PC-3 (cell line): ENCODE measurements at regions of chr15 and their contacts with region 1.

Region 1: DNA sequence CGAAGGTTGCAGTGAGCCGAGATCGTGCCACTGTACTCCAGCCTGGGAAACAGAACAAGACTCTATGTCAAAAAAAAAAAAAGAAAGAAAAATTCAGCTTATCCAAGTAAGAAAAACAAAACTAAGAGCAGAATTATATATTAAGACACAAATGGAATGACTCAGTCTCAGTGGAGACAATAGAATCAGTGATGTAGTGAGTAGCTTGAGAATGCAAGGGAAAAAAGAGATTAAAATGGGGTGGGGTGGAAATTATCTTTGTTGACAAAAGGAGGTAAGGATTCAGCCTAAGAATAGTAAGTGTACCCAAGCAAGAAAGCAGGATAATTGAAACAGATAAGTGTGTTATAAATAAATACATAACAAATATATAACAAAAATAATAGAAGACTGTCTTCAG is 70.7 kb downstream of the BLM start:
- DNase-seq: no peak
- ATAC-seq: no peak
- H3K4me3 ChIP-seq: no peak overlapping the region
- H3K27ac ChIP-seq: no peak overlapping the region
- H3K4me1 ChIP-seq: no peaks in the 10 kb centered on the region
- H3K27me3 ChIP-seq: no peaks in the 10 kb centered on the region
- CTCF ChIP-seq: no peak

Region 2: DNA sequence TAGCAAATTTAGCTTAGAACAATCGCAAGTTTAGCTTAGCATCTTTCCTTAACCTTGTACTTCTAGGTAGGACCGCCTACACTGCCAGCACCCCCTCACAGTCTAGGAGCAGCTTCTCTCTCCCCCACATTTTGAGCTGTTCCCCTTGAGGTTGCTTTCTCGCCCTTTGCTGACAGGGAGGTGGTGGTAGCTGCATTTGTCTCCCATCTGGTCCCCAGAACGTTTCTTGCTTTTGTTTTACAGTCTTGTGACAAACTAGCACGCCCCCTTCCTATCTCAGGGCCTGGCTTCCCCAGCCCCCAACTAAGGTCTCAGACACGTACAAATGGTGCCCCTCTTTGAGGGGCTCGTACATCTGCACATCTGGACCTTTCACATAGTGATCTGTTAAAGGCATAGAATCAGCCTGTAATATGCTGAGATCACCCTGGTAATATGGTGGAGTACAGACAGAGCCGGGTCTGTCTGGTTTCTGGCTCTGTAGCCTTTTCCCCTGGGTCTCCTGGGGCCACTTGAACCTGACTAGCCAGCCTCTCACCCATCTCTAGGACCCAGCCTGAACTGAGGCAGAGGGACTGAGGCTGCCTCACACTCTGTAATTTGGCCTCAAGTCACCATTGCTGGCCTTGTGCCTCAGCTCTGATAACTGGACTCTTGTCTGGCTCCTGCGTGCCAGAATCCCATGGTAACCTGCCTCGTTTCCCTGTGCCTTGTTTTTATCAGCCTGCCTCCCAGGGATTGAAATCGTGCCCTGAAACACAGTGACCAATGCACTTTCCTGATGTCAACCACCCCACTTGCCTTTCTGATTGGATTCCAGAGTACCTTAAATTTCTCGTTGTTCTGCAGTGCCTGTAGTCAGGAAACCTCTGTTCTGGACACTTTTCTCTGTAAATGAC is 230.4 kb before region 1 on chr15:
- CTCF ChIA-PET with region 1: no interaction called
- POLR2A ChIA-PET with region 1: interaction called, 12 read pairs
- intact Hi-C with region 1: no loop called
- DNase-seq: no peak
- ATAC-seq: no peak
- H3K4me3 ChIP-seq: no peak overlapping the region
- H3K27ac ChIP-seq: no peak overlapping the region
- H3K4me1 ChIP-seq: no peaks in the 10 kb centered on the region
- H3K27me3 ChIP-seq: no peaks in the 10 kb centered on the region
- CTCF ChIP-seq: no peak

Region 3: GRCh38 chr15:90862964-90863778 is 75.3 kb after region 1 on chr15:
- CTCF ChIA-PET with region 1: no interaction called
- POLR2A ChIA-PET with region 1: no interaction called
- intact Hi-C with region 1: no loop called
- DNase-seq: peak; percentile 68
- ATAC-seq: no peak
- H3K4me3 ChIP-seq: no peak overlapping the region
- H3K27ac ChIP-seq: peak overlapping the region; percentile 47
- H3K4me1 ChIP-seq: peaks cover 54% of the 10 kb centered on the region
- H3K27me3 ChIP-seq: no peaks in the 10 kb centered on the region
- CTCF ChIP-seq: no peak

Region 4: DNA sequence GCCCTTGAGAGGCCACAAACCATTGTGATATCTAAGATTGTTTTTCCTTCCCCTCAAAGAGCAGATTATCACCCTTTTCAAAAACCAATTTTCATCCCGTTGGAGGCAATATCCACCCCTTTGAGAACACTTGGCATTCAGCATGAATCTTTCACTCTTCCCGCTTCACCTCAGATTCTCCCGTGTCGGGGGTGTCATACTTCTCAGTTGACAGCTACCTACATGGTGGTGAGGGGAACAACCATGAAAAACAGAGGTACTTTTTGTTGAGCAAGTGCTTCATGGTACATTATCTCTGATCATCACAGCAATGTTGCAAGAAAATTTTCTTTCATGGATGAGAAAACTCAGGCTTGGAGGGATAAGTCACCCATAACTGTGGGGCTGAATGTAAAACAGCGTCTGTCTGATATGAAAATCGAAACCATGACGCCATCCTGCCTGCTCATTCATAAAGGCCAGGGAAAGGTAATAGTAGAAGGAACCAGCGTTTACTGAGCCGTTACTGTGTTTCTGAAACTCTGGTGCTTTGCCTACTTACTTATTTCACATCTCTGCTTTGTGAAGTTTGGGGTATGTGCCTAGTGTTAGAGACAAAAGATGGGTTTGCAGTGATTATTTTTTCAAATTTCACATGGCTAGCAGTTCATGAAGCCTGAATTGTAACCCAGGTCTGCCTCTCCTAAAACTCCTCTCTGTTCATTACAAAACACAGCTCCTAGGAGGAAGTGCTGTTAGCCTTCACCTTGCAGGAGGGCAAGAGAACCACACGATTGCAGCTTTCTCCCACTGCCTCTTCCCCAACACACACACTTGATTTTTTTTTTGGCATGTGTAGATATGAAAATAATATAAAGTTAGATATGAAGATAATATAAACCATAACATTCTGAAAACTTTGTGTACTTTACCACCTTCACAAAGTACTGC is 347.6 kb after region 1 on chr15:
- CTCF ChIA-PET with region 1: no interaction called
- POLR2A ChIA-PET with region 1: no interaction called
- intact Hi-C with region 1: no loop called
- DNase-seq: no peak
- ATAC-seq: no peak
- H3K4me3 ChIP-seq: no peak overlapping the region
- H3K27ac ChIP-seq: no peak overlapping the region
- H3K4me1 ChIP-seq: no peaks in the 10 kb centered on the region
- H3K27me3 ChIP-seq: peaks cover 78% of the 10 kb centered on the region
- CTCF ChIP-seq: no peak